MCF 10A (cell line): ENCODE measurements at regions of chr19 and their contacts with region 1.

Region 1: GRCh38 chr19:42108527-42109389 is 23.5 kb downstream of the POU2F2 start:
- DNase-seq: peak; percentile 90
- H3K4me3 Mint-ChIP-seq: no peak overlapping the region
- H3K27ac Mint-ChIP-seq: no peak overlapping the region
- H3K4me1 Mint-ChIP-seq: peaks cover 26% of the 10 kb centered on the region
- H3K27me3 Mint-ChIP-seq: peaks cover 20% of the 10 kb centered on the region
- CTCF ChIP-seq: peak; percentile 99

Region 2: GRCh38 chr19:42121656-42122069 is 12.9 kb after region 1 on chr19:
- CTCF ChIA-PET with region 1: interaction called, 23 read pairs
- POLR2A ChIA-PET with region 1: interaction called, 7 read pairs
- intact Hi-C with region 1: no loop called
- DNase-seq: peak; percentile 84
- H3K4me3 Mint-ChIP-seq: no peak overlapping the region
- H3K27ac Mint-ChIP-seq: no peak overlapping the region
- H3K4me1 Mint-ChIP-seq: peaks cover 20% of the 10 kb centered on the region
- H3K27me3 Mint-ChIP-seq: no peaks in the 10 kb centered on the region
- CTCF ChIP-seq: no peak

Region 3: GRCh38 chr19:42154471-42155323 is 45.9 kb after region 1 on chr19:
- CTCF ChIA-PET with region 1: interaction called, 11 read pairs
- POLR2A ChIA-PET with region 1: no interaction called
- intact Hi-C with region 1: no loop called
- DNase-seq: no peak
- H3K4me3 Mint-ChIP-seq: no peak overlapping the region
- H3K27ac Mint-ChIP-seq: no peak overlapping the region
- H3K4me1 Mint-ChIP-seq: no peaks in the 10 kb centered on the region
- H3K27me3 Mint-ChIP-seq: peaks cover 71% of the 10 kb centered on the region
- CTCF ChIP-seq: no peak

Region 4: GRCh38 chr19:42219812-42220750 is 111.3 kb after region 1 on chr19 and contains the start of gene ZNF526:
- CTCF ChIA-PET with region 1: interaction called, 20 read pairs
- POLR2A ChIA-PET with region 1: no interaction called
- intact Hi-C with region 1: no loop called
- DNase-seq: peak; percentile 98
- H3K4me3 Mint-ChIP-seq: peak within 1 kb of the TSS; percentile 91
- H3K27ac Mint-ChIP-seq: peak within 1 kb of the TSS; percentile 86
- H3K4me1 Mint-ChIP-seq: peaks cover 24% of the 10 kb centered on the region
- H3K27me3 Mint-ChIP-seq: no peaks in the 10 kb centered on the region
- CTCF ChIP-seq: no peak
- total RNA-seq, gene ZNF526: 11.5 and 12.3 TPM in 2 replicates

Region 5: GRCh38 chr19:42401365-42402303 is 292.9 kb after region 1 on chr19:
- CTCF ChIA-PET with region 1: interaction called, 6 read pairs
- POLR2A ChIA-PET with region 1: no interaction called
- intact Hi-C with region 1: loop called (anchors 1 kb)
- DNase-seq: peak; percentile 66
- H3K4me3 Mint-ChIP-seq: peak overlapping the region; percentile 47
- H3K27ac Mint-ChIP-seq: no peak overlapping the region
- H3K4me1 Mint-ChIP-seq: peaks cover 31% of the 10 kb centered on the region
- H3K27me3 Mint-ChIP-seq: no peaks in the 10 kb centered on the region
- CTCF ChIP-seq: peak; percentile 83